Aorta (tissue), 5 donors: ENCODE measurements at regions of chr2 and their contacts with region 1.

Region 1: GRCh38 chr2:48600204-48600813 is 17.3 kb upstream of the GTF2A1L start:
- DNase-seq: no peak
- ATAC-seq: no peak
- H3K4me3 ChIP-seq: no peak overlapping the region
- H3K27ac ChIP-seq: no peak overlapping the region
- H3K4me1 ChIP-seq: no peaks in the 10 kb centered on the region
- H3K27me3 ChIP-seq: no peaks in the 10 kb centered on the region

Region 2: DNA sequence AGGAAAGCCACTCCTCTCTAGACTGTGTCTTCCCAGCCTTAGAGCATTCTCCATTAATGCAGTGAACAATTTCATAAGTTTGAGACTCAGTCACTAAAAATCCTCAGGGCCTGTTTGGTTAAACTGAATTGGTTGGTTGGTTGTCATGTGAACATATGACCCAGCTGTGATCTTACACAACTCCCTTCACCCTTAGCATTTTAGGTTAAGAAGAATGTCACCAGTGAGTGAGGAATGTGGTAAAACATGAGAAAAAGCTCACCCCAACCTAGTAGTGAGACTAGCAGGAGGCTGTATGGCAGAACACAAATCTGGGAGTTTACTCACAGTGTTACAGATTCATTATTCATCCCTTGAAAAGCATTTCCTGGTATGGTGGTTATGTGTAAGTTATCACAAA is 122.8 kb after region 1 on chr2:
- intact Hi-C with region 1: loop called in 1 of 2 experiments (anchors 5 kb)
- DNase-seq: no peak
- ATAC-seq: no peak
- H3K4me3 ChIP-seq: no peak overlapping the region
- H3K27ac ChIP-seq: no peak overlapping the region
- H3K4me1 ChIP-seq: peaks cover 0 to 2% of the 10 kb centered on the region in 2 donors
- H3K27me3 ChIP-seq: no peaks in the 10 kb centered on the region